ENCODE measurements at regions of chr16 and their contacts with region 1.

Region 1: DNA sequence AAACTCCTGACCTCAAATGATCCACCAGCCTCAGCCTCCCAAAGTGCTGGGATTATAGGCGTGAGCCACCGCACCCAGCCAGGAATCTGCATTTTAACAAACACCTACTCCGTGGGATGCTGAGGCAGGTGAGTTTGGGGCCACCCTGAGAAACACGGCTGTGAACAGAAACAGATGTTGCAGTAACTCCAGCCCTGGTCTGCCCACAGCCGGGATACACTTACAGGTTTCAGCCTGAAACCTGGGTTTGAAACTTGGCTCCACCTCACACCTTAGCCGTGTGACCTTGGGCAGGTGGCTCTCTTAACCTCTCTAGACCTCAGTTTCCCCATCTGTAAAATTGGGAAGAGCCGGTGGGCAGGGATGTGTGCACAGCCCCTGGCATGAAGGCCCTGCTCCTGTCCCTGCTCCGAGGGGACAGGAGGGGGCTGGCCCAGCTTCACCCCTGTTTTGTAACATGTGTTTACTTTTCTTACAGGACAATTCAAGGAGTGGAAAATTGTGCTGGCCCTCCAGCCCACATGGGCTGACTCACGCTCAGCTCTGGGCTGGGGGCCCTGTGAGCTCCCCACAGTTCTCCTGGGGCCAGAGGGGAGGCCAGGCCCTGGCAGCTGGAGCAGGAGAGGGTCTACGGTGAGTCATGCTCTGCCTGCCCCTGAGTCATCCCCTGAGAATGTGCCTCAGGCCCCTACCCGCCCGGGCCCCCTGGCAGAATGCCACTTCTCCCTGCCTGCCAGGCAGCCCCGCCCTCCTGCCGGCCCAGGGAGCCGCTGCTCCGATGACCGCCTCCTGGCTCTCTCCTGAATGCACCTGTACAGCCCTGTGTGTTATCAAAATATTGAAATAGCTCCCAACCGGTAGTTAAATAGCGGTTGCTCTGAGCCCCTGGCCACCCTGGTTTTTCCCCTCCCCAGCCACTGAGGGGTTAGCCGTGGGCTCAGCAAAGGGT is 7.7 kb upstream of the PPL start:
- DNase-seq: peak; percentile 97
- ATAC-seq: peak; percentile 80
- H3K4me3 ChIP-seq: no peak overlapping the region
- H3K27ac ChIP-seq: peak overlapping the region; percentile 94
- H3K4me1 ChIP-seq: peaks cover 29% of the 10 kb centered on the region
- H3K27me3 ChIP-seq: no peaks in the 10 kb centered on the region
- CTCF ChIP-seq: no peak
- POLR2A ChIP-seq: no peak
- RAD21 ChIP-seq: 0 out of 2 replicates have a peak, but pooled peaks have one; percentile 8

Region 2: GRCh38 chr16:4752351-4753100 is 192.1 kb before region 1 on chr16:
- CTCF ChIA-PET with region 1: no interaction called
- POLR2A ChIA-PET with region 1: no interaction called
- dilution Hi-C with region 1: no loop called
- in situ Hi-C with region 1: no loop called
- intact Hi-C with region 1: no loop called
- DNase-seq: no peak
- ATAC-seq: no peak
- H3K4me3 ChIP-seq: no peak overlapping the region
- H3K27ac ChIP-seq: no peak overlapping the region
- H3K4me1 ChIP-seq: no peaks in the 10 kb centered on the region
- H3K27me3 ChIP-seq: no peaks in the 10 kb centered on the region
- CTCF ChIP-seq: no peak
- POLR2A ChIP-seq: no peak
- RAD21 ChIP-seq: no peak

Region 3: GRCh38 chr16:4766874-4767628 is 177.6 kb before region 1 on chr16 and contains the start of gene ZNF500:
- CTCF ChIA-PET with region 1: no interaction called
- POLR2A ChIA-PET with region 1: no interaction called
- dilution Hi-C with region 1: no loop called
- in situ Hi-C with region 1: no loop called
- intact Hi-C with region 1: loop called (anchors 2 kb)
- DNase-seq: peak; percentile 95
- ATAC-seq: peak; percentile 92
- H3K4me3 ChIP-seq: peak within 1 kb of the TSS; percentile 88
- H3K27ac ChIP-seq: peak within 1 kb of the TSS; percentile 75
- H3K4me1 ChIP-seq: peaks cover 7% of the 10 kb centered on the region
- H3K27me3 ChIP-seq: no peaks in the 10 kb centered on the region
- CTCF ChIP-seq: no peak
- POLR2A ChIP-seq: peak; percentile 74
- RAD21 ChIP-seq: no peak
- total RNA-seq, gene ZNF500: 4.5 and 4.7 TPM in 2 replicates

Region 4: GRCh38 chr16:4846891-4847773 is 97.5 kb before region 1 on chr16 and contains the starts of genes GLYR1 and UBN1:
- CTCF ChIA-PET with region 1: no interaction called
- POLR2A ChIA-PET with region 1: no interaction called
- dilution Hi-C with region 1: no loop called
- in situ Hi-C with region 1: no loop called
- intact Hi-C with region 1: loop called (anchors 2 kb)
- DNase-seq: peak; percentile 95
- ATAC-seq: peak; percentile 92
- H3K4me3 ChIP-seq: peak within 1 kb of the TSS; percentile 88
- H3K27ac ChIP-seq: peak within 1 kb of the TSS; percentile 90
- H3K4me1 ChIP-seq: peaks cover 10% of the 10 kb centered on the region
- H3K27me3 ChIP-seq: no peaks in the 10 kb centered on the region
- CTCF ChIP-seq: no peak
- POLR2A ChIP-seq: peak; percentile 87
- RAD21 ChIP-seq: no peak
- total RNA-seq, gene GLYR1: 26.0 and 27.8 TPM in 2 replicates
- total RNA-seq, gene UBN1: 5.7 and 7.8 TPM in 2 replicates

Region 5: GRCh38 chr16:4882633-4883285 is 61.8 kb before region 1 on chr16:
- CTCF ChIA-PET with region 1: no interaction called
- POLR2A ChIA-PET with region 1: no interaction called
- dilution Hi-C with region 1: no loop called
- in situ Hi-C with region 1: loop called (anchors 10 kb)
- intact Hi-C with region 1: loop called (anchors 5 kb)
- DNase-seq: peak; percentile 80
- ATAC-seq: peak; percentile 64
- H3K4me3 ChIP-seq: no peak overlapping the region
- H3K27ac ChIP-seq: no peak overlapping the region
- H3K4me1 ChIP-seq: peaks cover 9% of the 10 kb centered on the region
- H3K27me3 ChIP-seq: no peaks in the 10 kb centered on the region
- CTCF ChIP-seq: no peak
- POLR2A ChIP-seq: no peak
- RAD21 ChIP-seq: no peak

Region 6: DNA sequence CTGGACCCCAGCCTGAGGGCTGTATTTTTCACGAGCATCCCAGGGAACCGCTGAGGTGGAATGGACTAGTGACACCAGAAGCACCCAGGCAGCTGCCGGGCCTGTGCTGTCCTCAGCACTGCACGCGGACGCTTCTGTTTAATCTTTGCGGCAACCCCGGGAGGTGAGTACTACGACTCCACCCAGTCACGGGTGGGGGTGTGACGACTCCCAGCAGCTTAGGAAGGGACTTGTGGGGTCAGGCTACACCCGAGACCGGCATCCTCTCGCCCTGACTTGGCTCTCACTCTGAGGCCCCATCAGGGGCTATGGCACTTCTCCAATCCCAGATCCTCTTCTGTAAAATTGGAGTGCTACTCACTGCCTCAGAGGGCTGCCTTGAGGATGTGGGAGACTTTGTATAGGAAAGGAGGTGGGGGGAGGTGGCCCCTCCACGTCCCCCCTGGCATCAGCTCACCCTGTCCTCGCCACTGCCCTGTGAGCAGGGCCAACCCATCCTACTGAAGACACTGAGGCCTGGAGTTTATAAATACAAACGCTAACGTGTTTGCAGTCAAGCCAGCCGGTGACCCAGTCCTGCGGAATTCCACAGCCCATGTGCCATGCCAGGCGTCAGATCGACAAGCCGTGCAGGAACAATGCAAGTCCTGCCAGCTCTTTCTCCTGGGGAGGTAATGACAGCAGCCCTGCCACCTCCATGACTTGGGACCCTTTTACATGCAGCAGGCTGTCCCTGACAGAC is 52.1 kb before region 1 on chr16:
- CTCF ChIA-PET with region 1: no interaction called
- POLR2A ChIA-PET with region 1: no interaction called
- dilution Hi-C with region 1: no loop called
- in situ Hi-C with region 1: loop called (anchors 10 kb)
- intact Hi-C with region 1: loop called (anchors 2 kb)
- DNase-seq: peak; percentile 48
- ATAC-seq: peak; percentile 77
- H3K4me3 ChIP-seq: no peak overlapping the region
- H3K27ac ChIP-seq: no peak overlapping the region
- H3K4me1 ChIP-seq: peaks cover 8% of the 10 kb centered on the region
- H3K27me3 ChIP-seq: no peaks in the 10 kb centered on the region
- CTCF ChIP-seq: no peak
- POLR2A ChIP-seq: no peak
- RAD21 ChIP-seq: no peak

Region 7: DNA sequence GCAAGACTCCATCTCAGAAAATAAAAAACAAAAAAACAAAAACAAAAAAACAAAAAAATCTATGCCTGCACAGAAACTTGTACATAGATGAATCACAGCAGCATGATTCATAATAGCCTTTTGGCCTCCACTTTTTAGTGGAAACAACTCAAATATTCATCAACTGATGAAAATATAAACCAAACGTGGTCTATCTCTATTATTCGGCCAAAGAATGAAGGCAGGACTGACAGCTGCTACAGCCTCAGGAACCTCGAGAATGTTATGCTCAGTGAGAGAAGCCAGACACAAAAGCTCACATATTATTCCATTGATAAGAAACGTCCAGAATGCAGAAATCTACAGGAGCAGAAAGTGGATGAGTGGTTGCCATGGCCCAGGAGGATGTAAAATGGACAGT is 27.5 kb before region 1 on chr16:
- CTCF ChIA-PET with region 1: interaction called, 3 read pairs
- POLR2A ChIA-PET with region 1: no interaction called
- dilution Hi-C with region 1: no loop called
- in situ Hi-C with region 1: no loop called
- intact Hi-C with region 1: loop called (anchors 2 kb)
- DNase-seq: peak; percentile 74
- ATAC-seq: peak; percentile 22
- H3K4me3 ChIP-seq: no peak overlapping the region
- H3K27ac ChIP-seq: no peak overlapping the region
- H3K4me1 ChIP-seq: peaks cover 14% of the 10 kb centered on the region
- H3K27me3 ChIP-seq: no peaks in the 10 kb centered on the region; the same call in 1 of the 2 replicates
- CTCF ChIP-seq: no peak
- POLR2A ChIP-seq: no peak
- RAD21 ChIP-seq: no peak

Measured in IMR-90 (cell line).